ENCODE measurements at regions of chr5 and their contacts with region 1.

Region 1: DNA sequence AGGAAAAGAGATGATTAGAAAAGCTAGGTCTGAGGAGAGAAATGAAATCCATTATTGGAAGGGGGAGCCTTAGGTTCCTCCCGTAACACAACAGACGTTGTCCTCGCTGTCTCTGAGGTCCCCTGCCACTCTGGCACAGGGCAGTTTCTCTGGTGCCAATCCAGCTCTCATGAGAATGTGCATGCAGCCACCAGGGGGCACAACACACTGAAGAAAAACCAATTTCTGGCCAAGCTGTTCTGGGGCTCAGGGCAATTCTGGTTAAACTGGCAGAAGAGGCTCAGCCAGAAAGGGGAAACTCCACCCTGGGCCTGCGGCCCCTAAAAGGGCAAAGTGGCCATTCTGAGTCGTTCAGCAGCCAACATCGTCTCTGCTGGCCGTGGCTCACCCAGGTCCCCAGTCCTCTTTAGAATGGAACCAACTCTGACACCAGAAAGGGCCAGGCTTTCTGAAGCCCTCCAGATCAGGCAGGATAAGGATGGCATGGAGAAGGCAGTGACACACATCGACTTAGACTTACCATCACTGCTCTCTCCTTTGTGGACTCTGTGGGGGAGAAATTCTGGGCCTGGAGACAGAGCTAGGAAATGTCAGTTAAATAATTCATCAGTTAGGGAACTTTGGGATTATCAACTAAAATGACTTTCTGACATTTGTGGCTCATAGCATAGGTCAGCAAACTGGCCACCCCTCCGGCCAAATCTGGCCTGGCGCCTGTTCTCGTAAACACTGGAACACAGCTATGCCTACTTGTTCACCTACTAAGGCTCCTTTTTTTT is 58.5 kb upstream of the GOLPH3 start:
- DNase-seq: peak; percentile 81 to 91 (median 86)
- ATAC-seq: peak; percentile 84 to 89
- H3K4me3 ChIP-seq: no peak overlapping the region
- H3K27ac ChIP-seq: no peak overlapping the region
- H3K4me1 ChIP-seq: peaks cover 8% of the 10 kb centered on the region
- H3K27me3 ChIP-seq: no peaks in the 10 kb centered on the region

Region 2: DNA sequence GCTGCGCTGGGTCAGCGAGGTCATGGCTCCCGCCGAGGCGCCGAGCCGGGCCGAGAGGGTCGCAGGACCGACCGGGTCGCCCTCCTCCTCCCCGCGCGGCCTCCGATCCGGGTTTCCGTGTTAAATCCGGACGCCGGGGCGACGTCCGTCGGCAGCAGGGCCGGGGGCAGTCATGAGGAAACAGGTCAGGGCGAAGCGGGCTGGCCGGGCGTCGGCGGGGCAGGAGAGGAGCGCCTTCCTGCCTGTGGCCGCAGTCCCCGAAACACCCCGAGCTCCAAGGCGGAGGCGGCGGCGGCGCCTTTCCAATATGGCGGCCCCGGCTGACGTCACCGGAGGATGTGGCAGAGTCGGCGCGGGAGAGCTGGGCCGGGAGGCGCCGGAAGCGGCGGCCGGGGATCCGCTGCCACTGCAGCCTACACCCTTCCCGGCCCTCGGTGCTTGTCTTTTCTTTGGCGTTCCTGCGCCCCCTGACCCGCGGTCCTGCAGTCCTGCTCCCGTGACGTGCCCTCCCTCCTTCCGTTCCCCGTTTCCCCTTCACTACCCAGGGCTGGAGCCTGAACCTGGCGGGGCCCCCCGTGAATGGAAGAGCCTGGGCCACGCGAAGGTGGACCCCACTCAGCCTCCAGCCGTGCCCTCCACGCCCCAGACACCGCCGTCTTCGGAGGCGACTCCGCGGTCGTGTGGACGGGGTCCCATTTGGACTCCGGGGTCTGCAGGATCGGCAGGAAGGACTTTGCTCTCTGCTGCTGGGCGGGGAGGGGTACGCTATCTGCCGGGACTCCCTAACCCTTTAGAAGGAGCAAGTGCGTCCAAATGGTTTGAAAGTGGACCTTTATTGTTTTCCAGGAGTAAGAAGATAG is 58.4 kb before region 1 on chr5 and contains the start of gene GOLPH3:
- intact Hi-C with region 1: loop called in 1 of 4 experiments (anchors 10 kb)
- DNase-seq: peak; percentile 96 to 99 (median 98)
- ATAC-seq: peak; percentile 96 to 97
- H3K4me3 ChIP-seq: peak within 1 kb of the TSS; percentile 67
- H3K27ac ChIP-seq: peak within 1 kb of the TSS; percentile 82
- H3K4me1 ChIP-seq: peaks cover 3% of the 10 kb centered on the region
- H3K27me3 ChIP-seq: no peaks in the 10 kb centered on the region
- total RNA-seq, gene GOLPH3: 53.7 to 76.4 (median 57.6) TPM

Region 3: DNA sequence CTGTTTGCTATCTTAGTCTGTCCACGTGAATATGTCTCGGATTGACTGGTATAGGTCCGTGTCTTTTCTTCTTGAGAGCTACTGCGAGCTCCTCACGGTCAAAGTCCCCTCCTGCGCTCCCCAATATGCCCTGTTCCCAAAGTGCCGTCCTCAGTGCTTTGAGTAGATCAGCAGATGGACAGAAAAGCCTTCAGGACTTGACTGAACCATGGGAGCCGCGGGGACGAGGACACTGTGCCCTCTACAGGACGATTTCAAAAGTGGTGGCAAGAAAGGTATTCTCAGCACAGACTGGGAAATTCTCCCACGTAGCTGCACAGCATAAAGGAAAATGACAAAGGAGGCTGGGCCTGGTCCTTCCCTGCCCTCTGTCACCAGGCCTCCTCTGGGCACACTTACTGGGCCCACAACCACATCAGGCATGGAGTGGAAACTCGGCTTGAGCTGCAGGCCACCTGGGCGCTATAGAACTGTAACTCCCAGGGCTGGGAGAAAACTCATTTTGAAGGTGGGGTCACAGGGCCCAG is 96.7 kb after region 1 on chr5:
- intact Hi-C with region 1: loop called (anchors 1 to 5 kb)
- DNase-seq: peak; percentile 40 to 79 (median 76)
- ATAC-seq: peak; percentile 89 to 93
- H3K4me3 ChIP-seq: no peak overlapping the region
- H3K27ac ChIP-seq: no peak overlapping the region
- H3K4me1 ChIP-seq: peaks cover 2% of the 10 kb centered on the region
- H3K27me3 ChIP-seq: no peaks in the 10 kb centered on the region

Region 4: GRCh38 chr5:32613050-32613672 is 380.5 kb after region 1 on chr5:
- intact Hi-C with region 1: loop called in 1 of 4 experiments (anchors 10 kb)
- DNase-seq: peak; percentile 78 to 92 (median 88)
- ATAC-seq: peak; percentile 63 to 73
- H3K4me3 ChIP-seq: no peak overlapping the region
- H3K27ac ChIP-seq: no peak overlapping the region
- H3K4me1 ChIP-seq: peaks cover 3% of the 10 kb centered on the region
- H3K27me3 ChIP-seq: no peaks in the 10 kb centered on the region